ENCODE measurements at regions of chr6 and their contacts with region 1.

Region 1: DNA sequence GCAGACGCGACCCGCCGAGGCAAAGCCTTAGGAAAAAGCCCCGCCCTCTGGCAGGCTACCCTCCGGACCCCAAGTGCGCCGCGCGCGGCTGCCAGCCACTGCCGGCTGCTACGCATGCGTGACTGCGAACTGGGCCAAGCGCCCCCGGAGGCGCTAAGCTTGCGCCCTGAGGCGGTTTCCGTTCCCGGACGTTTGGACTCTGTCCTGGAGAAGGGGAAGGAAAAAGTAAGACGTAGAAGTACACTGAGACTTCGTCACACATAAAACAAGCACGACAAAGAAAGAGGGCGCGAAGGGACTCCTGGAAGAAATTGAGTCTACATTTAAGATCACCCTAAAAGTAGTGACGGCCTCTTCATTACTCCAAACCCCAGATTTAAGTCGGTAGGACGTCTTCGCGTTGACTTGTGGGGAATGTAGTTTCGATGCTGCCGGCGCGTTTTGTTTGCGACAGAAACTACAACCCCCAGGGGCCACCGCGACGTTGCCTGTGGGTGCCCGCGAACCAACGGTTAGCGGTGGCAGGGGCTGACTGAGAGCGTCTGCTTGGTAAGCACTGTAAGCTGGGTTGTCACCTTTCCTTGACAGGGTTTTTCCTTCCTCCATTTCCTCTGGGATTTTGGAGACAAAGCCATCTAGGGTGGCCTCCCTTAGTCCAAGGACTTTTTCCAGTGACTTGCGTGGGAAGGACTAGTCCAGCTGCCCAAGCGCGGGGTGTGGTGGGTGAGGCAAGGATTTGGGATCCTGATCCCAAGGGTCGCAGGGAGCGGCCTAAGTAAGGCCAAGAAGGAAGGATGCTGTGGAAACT is at the start of gene CEP57L1:
- DNase-seq: peak; percentile 91
- H3K4me3 Mint-ChIP-seq: peak within 1 kb of the TSS; percentile 95
- H3K27ac Mint-ChIP-seq: peak within 1 kb of the TSS; percentile 97
- H3K4me1 Mint-ChIP-seq: peaks cover 54% of the 10 kb centered on the region
- H3K27me3 Mint-ChIP-seq: no peaks in the 10 kb centered on the region
- total RNA-seq, gene CEP57L1: 13.5 and 16.3 TPM in 2 replicates

Region 2: GRCh38 chr6:107957909-107958688 is 1137.1 kb before region 1 on chr6 and contains the start of gene SEC63:
- intact Hi-C with region 1: loop called (anchors 1 kb)
- DNase-seq: peak; percentile 97
- H3K4me3 Mint-ChIP-seq: peak within 1 kb of the TSS; percentile 100
- H3K27ac Mint-ChIP-seq: peak within 1 kb of the TSS; percentile 99
- H3K4me1 Mint-ChIP-seq: peaks cover 14% of the 10 kb centered on the region
- H3K27me3 Mint-ChIP-seq: peaks cover 5% of the 10 kb centered on the region
- total RNA-seq, gene SEC63: 87.1 and 90.7 TPM in 2 replicates

Region 3: DNA sequence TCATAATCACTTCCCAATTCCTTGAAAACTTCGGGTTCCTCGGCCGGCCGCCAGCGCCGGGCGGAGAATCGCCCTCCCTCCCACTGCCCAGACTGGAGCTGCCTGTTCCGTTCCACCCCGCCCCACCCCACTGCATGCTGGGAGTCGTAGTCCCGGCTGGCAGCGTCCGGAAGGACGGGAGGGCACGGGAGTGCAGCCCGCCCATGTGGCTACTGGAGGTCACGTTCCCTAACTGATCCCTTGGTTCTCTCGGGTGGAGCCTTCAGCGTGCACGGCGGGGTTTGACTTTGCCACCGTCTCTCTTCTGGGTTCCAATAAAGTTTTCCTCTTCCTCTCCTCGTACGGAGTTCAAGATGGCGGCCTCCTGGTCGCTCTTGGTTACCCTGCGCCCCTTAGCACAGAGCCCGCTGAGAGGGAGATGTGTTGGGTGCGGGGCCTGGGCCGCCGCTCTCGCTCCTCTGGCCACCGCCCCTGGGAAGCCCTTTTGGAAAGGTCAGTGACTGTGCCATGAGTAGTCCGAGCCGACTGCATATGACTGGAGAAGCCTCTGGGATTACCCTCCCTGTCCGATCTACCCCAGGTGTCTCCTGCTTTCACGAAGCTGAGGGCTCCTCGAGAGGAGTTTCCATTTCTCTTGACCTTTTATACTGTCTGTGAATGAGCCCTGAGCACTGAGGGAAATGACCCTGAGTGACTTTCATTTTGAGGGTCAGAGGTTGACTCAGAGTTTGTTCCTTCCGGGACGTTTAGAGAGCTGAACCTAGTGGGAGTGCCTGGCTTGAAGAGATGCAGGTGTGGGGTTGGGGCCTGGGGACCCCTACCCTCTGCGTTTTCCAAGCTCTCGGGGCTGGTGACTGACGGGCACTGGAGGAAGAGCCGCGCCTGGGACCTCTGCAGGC is 800.3 kb before region 1 on chr6 and contains the start of gene AFG1L:
- intact Hi-C with region 1: loop called (anchors 1 kb)
- DNase-seq: peak; percentile 82
- H3K4me3 Mint-ChIP-seq: peak within 1 kb of the TSS; percentile 100
- H3K27ac Mint-ChIP-seq: peak within 1 kb of the TSS; percentile 100
- H3K4me1 Mint-ChIP-seq: peaks cover 26% of the 10 kb centered on the region
- H3K27me3 Mint-ChIP-seq: peaks cover 2% of the 10 kb centered on the region
- total RNA-seq, gene AFG1L: 4.3 and 6.0 TPM in 2 replicates

Region 4: GRCh38 chr6:108874470-108875160 is 220.6 kb before region 1 on chr6:
- intact Hi-C with region 1: loop called (anchors 1 kb)
- DNase-seq: peak; percentile 51
- H3K4me3 Mint-ChIP-seq: peak overlapping the region; percentile 34
- H3K27ac Mint-ChIP-seq: peak overlapping the region; percentile 96
- H3K4me1 Mint-ChIP-seq: peaks cover 80% of the 10 kb centered on the region
- H3K27me3 Mint-ChIP-seq: peaks cover 4% of the 10 kb centered on the region

Region 5: GRCh38 chr6:109440331-109441068 is 345.3 kb after region 1 on chr6 and contains the starts of genes PPIL6 and SMPD2:
- intact Hi-C with region 1: loop called (anchors 5 kb)
- DNase-seq: peak; percentile 79
- H3K4me3 Mint-ChIP-seq: peak within 1 kb of the TSS; percentile 88
- H3K27ac Mint-ChIP-seq: peak within 1 kb of the TSS; percentile 91
- H3K4me1 Mint-ChIP-seq: peaks cover 23% of the 10 kb centered on the region
- H3K27me3 Mint-ChIP-seq: peaks cover 5% of the 10 kb centered on the region
- total RNA-seq, gene PPIL6: 0.13 and 0.29 TPM in 2 replicates
- total RNA-seq, gene SMPD2: 18.5 and 19.1 TPM in 2 replicates

Region 6: GRCh38 chr6:109690737-109691621 is 595.7 kb after region 1 on chr6 and contains the starts of genes AK9 and FIG4:
- intact Hi-C with region 1: loop called (anchors 2 kb)
- DNase-seq: peak; percentile 85
- H3K4me3 Mint-ChIP-seq: peak within 1 kb of the TSS; percentile 87
- H3K27ac Mint-ChIP-seq: peak within 1 kb of the TSS; percentile 84
- H3K4me1 Mint-ChIP-seq: peaks cover 47% of the 10 kb centered on the region
- H3K27me3 Mint-ChIP-seq: peaks cover 13% of the 10 kb centered on the region
- total RNA-seq, gene AK9: 2.8 and 3.8 TPM in 2 replicates
- total RNA-seq, gene FIG4: 7.5 and 8.1 TPM in 2 replicates

Measured in activated T-helper 1 cell treated with anti-CD3 and anti-CD28 coated beads, Interleukin-12 subunit alpha, Interleukin-12 subunit beta, Interleukin-2, Interleukin-4 antibody, amounts not matched to agents 30 ng/mL and 10 ng/mL and 1 ng/mL, durations not matched to agents 14 hours and 24 hours and 36 hours (primary cell).